MCF 10A (cell line): ENCODE measurements at regions of chr9 and their contacts with region 1.

Region 1: DNA sequence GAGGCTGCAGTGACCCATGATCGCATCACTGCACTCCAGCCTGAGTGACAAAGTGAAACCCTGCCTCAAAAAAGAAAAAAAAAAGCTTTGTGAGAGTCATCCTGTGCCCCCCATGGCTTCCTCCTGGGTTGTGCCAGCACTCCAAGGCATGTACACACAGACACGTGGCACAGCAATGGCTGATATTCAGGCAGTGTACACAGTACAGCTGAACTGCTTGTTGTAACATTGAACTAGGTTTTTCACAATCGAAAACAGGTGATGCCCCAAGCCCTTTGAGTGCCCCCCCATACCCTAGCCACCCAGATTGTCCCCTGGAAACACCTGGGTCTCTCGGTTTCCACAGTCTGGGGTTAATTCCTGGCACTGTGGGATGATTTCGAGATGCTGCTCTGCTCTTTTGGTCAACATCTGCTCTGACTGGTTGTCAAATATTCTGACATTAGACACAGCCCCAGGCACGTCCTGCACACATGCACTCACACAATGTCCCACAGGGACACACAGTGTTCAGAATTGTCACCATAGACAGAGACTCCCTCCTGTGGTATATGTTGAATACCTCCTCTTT is 9.2 kb downstream of the SPINK4 start:
- DNase-seq: no peak
- H3K4me3 Mint-ChIP-seq: no peak overlapping the region
- H3K27ac Mint-ChIP-seq: peak overlapping the region; percentile 80
- H3K4me1 Mint-ChIP-seq: peaks cover 30% of the 10 kb centered on the region
- H3K27me3 Mint-ChIP-seq: no peaks in the 10 kb centered on the region
- CTCF ChIP-seq: no peak

Region 2: DNA sequence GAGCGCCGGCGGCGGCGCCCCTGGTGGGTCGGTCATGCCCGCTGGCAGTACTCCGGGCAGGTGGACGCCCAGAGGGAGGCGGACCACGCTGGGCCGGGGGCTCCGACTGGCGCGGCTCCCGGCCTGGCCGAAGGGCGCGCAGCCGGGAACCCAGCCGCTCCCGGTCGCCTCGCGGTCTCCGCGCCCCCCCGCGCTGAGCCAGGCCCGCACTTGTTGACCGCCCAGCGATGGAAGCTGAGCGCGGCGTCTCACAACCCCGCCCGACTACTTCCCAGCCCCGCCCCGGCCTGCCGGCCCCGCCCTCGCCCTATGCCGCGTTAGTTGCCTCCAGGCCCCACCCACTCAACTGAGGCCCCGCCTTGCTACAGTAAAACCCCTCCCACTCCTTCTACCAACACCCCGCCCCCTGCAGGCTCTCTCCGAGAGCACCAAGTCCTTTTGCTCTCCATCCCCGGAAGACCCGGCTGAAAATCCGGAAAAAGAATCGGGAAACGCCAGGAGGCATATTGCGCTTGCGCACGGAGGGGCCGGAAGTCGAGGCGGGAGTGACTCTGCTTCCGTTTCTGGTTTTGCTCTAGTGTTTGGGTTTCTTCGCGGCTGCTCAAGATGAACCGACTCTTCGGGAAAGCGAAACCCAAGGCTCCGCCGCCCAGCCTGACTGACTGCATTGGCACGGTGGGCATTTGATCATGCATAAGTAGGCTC is 15.5 kb after region 1 on chr9 and contains the starts of genes BAG1 and CHMP5:
- CTCF ChIA-PET with region 1: interaction called, 5 read pairs
- POLR2A ChIA-PET with region 1: interaction called, 94 read pairs
- intact Hi-C with region 1: no loop called
- DNase-seq: peak; percentile 99
- H3K4me3 Mint-ChIP-seq: peak within 1 kb of the TSS; percentile 99
- H3K27ac Mint-ChIP-seq: peak within 1 kb of the TSS; percentile 95
- H3K4me1 Mint-ChIP-seq: peaks cover 33% of the 10 kb centered on the region
- H3K27me3 Mint-ChIP-seq: no peaks in the 10 kb centered on the region
- CTCF ChIP-seq: no peak
- total RNA-seq, gene BAG1: 75.7 and 91.8 TPM in 2 replicates
- total RNA-seq, gene CHMP5: 67.6 and 85.1 TPM in 2 replicates

Region 3: GRCh38 chr9:34363619-34364351 is 1114.6 kb after region 1 on chr9:
- CTCF ChIA-PET with region 1: no interaction called
- POLR2A ChIA-PET with region 1: no interaction called
- intact Hi-C with region 1: no loop called
- DNase-seq: no peak
- H3K4me3 Mint-ChIP-seq: no peak overlapping the region
- H3K27ac Mint-ChIP-seq: no peak overlapping the region
- H3K4me1 Mint-ChIP-seq: no peaks in the 10 kb centered on the region
- H3K27me3 Mint-ChIP-seq: no peaks in the 10 kb centered on the region
- CTCF ChIP-seq: no peak